ENCODE measurements at regions of chr17 and their contacts with region 1.

Region 1: DNA sequence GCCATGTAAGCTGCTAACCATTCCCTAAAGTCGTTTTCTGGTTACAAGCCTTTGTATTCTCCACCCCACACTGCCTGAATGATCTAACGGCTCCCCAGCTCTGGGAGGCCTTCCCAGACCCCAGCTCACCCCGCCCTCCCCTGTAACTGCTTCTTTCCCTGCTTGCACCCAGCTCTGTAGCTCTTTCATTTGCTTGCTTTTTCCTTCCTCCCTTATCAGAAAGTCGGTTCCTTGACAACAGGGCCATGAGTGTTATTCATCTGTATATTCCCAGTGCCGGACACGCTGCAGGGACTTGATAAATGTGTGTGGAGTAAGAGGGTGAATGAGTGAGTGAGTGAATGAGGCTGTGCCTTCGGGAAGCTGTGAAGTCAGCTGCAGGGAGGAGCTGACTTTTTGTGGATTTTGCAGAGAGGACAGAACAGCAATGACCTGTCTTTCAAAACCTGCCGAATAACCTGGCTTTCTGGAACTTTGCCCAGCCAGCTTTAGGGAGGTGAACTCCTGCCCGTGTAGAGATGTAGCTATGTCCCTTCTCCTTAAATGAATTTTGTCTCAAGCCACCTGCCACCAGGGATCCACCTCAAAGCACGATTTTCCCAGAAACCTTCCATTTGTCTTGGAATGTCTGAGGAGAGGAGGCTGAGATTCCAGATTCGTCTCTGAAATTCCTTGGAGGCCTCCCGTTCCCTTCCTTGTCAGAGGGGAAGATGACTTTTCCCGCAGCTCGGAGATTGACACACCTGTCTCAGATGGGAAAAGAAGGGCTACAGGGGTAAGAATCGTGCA is 20.0 kb upstream of the CACNG4 start:
- DNase-seq: no peak
- H3K4me3 ChIP-seq: peak overlapping the region; percentile 22
- H3K27ac ChIP-seq: no peak overlapping the region
- H3K4me1 ChIP-seq: peaks cover 35% of the 10 kb centered on the region
- H3K27me3 ChIP-seq: no peaks in the 10 kb centered on the region
- CTCF ChIP-seq: no peak

Region 2: DNA sequence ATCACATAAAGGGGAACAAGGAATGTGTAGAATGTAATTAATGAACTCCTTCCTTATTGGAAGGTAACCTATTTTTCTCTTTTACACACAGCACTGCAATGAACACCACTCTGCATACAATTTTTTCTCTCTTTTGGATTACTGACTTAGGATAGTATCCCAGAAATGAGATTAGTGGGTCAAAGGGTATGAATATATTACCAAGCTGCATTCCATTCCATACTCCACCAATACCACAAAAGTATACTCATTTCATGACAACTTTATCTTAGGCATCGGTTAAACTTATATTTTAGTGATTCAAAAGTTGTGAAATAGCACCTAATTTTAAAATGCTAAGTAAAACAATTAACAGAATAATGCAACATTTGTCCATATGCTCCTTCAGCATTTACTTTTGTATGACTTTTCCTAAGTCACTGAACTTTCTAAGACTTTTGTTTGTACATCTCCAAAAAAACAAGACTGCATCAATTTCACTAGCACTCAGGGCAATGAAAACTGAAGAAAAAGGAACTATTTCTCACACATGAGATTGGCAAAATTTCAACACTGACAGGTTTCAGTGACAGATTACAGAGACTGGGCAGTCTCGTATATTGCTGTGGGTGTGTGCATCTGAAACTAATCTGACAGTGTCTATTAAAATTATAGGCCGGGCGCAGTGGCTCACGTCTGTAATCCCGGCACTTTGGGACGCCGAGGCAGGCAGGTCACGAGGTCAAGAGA is 268.3 kb after region 1 on chr17:
- CTCF ChIA-PET with region 1: interaction called, 13 read pairs
- POLR2A ChIA-PET with region 1: no interaction called
- intact Hi-C with region 1: no loop called
- DNase-seq: peak; percentile 61
- H3K4me3 ChIP-seq: no peak overlapping the region
- H3K27ac ChIP-seq: peak overlapping the region; percentile 53
- H3K4me1 ChIP-seq: peaks cover 30% of the 10 kb centered on the region
- H3K27me3 ChIP-seq: no peaks in the 10 kb centered on the region
- CTCF ChIP-seq: no peak

Region 3: GRCh38 chr17:67400193-67400592 is 455.6 kb after region 1 on chr17:
- CTCF ChIA-PET with region 1: no interaction called
- POLR2A ChIA-PET with region 1: no interaction called
- intact Hi-C with region 1: no loop called
- DNase-seq: peak; percentile 82
- H3K4me3 ChIP-seq: no peak overlapping the region
- H3K27ac ChIP-seq: peak overlapping the region; percentile 65
- H3K4me1 ChIP-seq: peaks cover 17% of the 10 kb centered on the region
- H3K27me3 ChIP-seq: no peaks in the 10 kb centered on the region
- CTCF ChIP-seq: no peak

Measured in A673 (cell line).